ENCODE measurements at regions of chr22 and their contacts with region 1.

Region 1: GRCh38 chr22:45284705-45285262 is at the start of gene UPK3A:
- DNase-seq: peak; percentile 85
- ATAC-seq: peak; percentile 90
- H3K4me3 ChIP-seq: peak within 1 kb of the TSS; percentile 15 to 45 (median 31)
- H3K4me3 Mint-ChIP-seq: peak within 1 kb of the TSS; percentile 59
- H3K27ac ChIP-seq: no peak within 1 kb of the TSS
- H3K27ac Mint-ChIP-seq: peak within 1 kb of the TSS; percentile 53
- H3K4me1 ChIP-seq: peaks cover 40 to 56% of the 10 kb centered on the region in 2 donors
- H3K4me1 Mint-ChIP-seq: peaks cover 41% of the 10 kb centered on the region
- H3K27me3 ChIP-seq: no peaks in the 10 kb centered on the region
- H3K27me3 Mint-ChIP-seq: no peaks in the 10 kb centered on the region
- CTCF ChIP-seq: no peak
- total RNA-seq, gene UPK3A: not detected in 2 replicates

Region 2: DNA sequence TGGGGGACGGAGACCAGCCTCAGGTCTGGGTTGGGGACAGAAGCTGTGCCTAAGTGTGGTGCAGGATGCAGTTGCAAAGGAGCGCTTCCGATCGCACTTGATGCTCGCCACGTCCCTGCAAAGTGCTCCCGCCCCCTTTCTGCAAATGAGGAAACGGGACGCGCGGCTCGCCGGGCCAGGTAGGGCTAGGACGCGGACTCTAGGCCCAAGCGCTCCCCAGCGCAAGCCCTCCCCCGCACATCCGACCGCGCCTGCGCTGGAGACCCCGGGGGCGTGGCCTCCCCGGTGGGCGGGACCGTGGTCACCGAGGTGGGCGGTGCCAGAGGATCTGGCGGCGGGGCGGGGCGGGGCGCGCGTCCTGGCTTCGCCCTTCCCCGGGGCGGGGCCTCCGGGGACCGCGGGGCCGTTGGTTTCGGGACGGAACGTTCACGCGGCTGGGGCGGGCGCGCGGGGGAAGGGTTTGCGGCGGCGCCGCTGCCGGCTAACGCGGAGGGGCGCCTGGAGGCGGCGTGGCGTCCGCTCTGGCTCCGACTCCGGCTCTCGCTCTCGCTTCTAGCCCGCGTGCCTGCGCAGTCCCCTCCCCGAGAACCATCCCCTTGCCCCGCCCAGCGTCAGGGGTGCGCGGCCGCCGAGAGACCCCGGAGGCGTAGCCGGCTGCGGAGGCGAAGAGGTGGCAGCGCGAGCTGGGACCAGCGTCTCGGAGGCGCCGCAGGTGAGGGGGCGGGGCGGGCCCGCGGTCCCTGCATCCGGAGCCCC is 24.9 kb after region 1 on chr22 and contains the start of gene FAM118A:
- CTCF ChIA-PET with region 1: no interaction called
- POLR2A ChIA-PET with region 1: no interaction called
- intact Hi-C with region 1: loop called (anchors 1 kb)
- DNase-seq: peak; percentile 99
- ATAC-seq: peak; percentile 88
- H3K4me3 ChIP-seq: peak within 1 kb of the TSS; percentile 27 to 95 (median 80)
- H3K4me3 Mint-ChIP-seq: peak within 1 kb of the TSS; percentile 92
- H3K27ac ChIP-seq: peak within 1 kb of the TSS; percentile 73
- H3K27ac Mint-ChIP-seq: peak within 1 kb of the TSS; percentile 97
- H3K4me1 ChIP-seq: peaks cover 18 to 25% of the 10 kb centered on the region in 2 donors
- H3K4me1 Mint-ChIP-seq: peaks cover 36% of the 10 kb centered on the region
- H3K27me3 ChIP-seq: no peaks in the 10 kb centered on the region
- H3K27me3 Mint-ChIP-seq: no peaks in the 10 kb centered on the region
- CTCF ChIP-seq: no peak
- total RNA-seq, gene FAM118A: 66.5 and 74.6 TPM in 2 replicates